PC-9 (cell line): ENCODE measurements at regions of chr3 and their contacts with region 1.

Region 1: DNA sequence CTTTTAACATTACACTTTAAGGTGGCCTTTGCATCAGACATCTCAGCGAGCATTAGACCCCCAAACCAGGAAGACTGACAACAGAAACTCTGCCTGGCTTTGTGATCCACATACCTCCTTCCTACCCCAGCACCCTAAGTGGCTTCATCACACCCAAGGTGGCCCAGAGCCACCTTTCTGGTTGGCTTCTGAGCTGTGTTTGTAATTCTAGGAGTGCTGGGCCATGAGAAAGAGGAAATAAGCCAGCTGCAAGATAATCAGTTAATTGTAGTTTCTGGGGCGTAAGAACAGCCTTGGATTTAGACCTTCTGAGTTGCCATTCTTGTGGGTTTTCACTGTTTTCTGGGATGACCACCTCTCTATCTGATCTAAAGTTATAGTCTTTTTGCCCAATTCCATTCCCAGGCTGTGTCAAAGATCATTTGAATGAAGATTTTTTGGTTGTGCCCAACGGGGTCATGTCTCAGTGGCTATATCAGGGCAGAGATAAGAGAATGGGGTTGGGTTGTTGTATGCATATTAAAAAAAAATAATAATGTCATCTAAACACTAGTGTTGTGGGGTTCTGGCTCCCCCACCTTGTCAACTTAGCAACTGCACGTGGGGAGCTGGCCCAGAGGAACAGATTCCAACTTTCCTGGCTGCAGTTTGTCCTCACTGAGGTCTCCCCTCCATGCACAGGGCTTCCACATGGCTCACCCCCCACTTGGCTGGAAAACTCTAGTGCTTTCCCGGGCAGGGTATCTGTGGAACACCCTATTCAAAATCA is 234.8 kb upstream of the WNT5A start:
- DNase-seq: peak in 1 of 2 experiments; percentile 53
- H3K4me3 ChIP-seq: no peak overlapping the region
- H3K27ac ChIP-seq: 0 out of 2 replicates have a peak overlapping the region, but pooled peaks have one; percentile 20
- H3K4me1 ChIP-seq: peaks cover 16% of the 10 kb centered on the region
- H3K27me3 ChIP-seq: no peaks in the 10 kb centered on the region
- CTCF ChIP-seq: peak; percentile 65

Region 2: GRCh38 chr3:54853573-54854404 is 868.1 kb before region 1 on chr3:
- CTCF ChIA-PET with region 1: no interaction called
- POLR2A ChIA-PET with region 1: no interaction called
- intact Hi-C with region 1: loop called (anchors 1 kb)
- DNase-seq: peak in 1 of 2 experiments; percentile 67
- H3K4me3 ChIP-seq: no peak overlapping the region
- H3K27ac ChIP-seq: no peak overlapping the region
- H3K4me1 ChIP-seq: no peaks in the 10 kb centered on the region
- H3K27me3 ChIP-seq: no peaks in the 10 kb centered on the region
- CTCF ChIP-seq: peak; percentile 93

Region 3: GRCh38 chr3:54951405-54951804 is 770.5 kb before region 1 on chr3:
- CTCF ChIA-PET with region 1: no interaction called
- POLR2A ChIA-PET with region 1: no interaction called
- intact Hi-C with region 1: loop called (anchors 2 kb)
- DNase-seq: peak in 1 of 2 experiments; percentile 42
- H3K4me3 ChIP-seq: no peak overlapping the region
- H3K27ac ChIP-seq: no peak overlapping the region
- H3K4me1 ChIP-seq: peaks cover 17% of the 10 kb centered on the region
- H3K27me3 ChIP-seq: no peaks in the 10 kb centered on the region
- CTCF ChIP-seq: 0 out of 2 replicates have a peak, but pooled peaks have one; percentile 33

Region 4: GRCh38 chr3:55492976-55493375 is 228.9 kb before region 1 on chr3:
- CTCF ChIA-PET with region 1: no interaction called
- POLR2A ChIA-PET with region 1: interaction called, 10 read pairs
- intact Hi-C with region 1: no loop called
- DNase-seq: no peak
- H3K4me3 ChIP-seq: no peak overlapping the region
- H3K27ac ChIP-seq: no peak overlapping the region
- H3K4me1 ChIP-seq: peaks cover 26% of the 10 kb centered on the region
- H3K27me3 ChIP-seq: no peaks in the 10 kb centered on the region
- CTCF ChIP-seq: no peak

Region 5: GRCh38 chr3:55524565-55525244 is 197.2 kb before region 1 on chr3:
- CTCF ChIA-PET with region 1: interaction called, 15 read pairs
- POLR2A ChIA-PET with region 1: no interaction called
- intact Hi-C with region 1: no loop called
- DNase-seq: peak; percentile 55 to 76
- H3K4me3 ChIP-seq: no peak overlapping the region
- H3K27ac ChIP-seq: peak overlapping the region; percentile 67
- H3K4me1 ChIP-seq: peaks cover 27% of the 10 kb centered on the region
- H3K27me3 ChIP-seq: no peaks in the 10 kb centered on the region
- CTCF ChIP-seq: no peak

Region 6: DNA sequence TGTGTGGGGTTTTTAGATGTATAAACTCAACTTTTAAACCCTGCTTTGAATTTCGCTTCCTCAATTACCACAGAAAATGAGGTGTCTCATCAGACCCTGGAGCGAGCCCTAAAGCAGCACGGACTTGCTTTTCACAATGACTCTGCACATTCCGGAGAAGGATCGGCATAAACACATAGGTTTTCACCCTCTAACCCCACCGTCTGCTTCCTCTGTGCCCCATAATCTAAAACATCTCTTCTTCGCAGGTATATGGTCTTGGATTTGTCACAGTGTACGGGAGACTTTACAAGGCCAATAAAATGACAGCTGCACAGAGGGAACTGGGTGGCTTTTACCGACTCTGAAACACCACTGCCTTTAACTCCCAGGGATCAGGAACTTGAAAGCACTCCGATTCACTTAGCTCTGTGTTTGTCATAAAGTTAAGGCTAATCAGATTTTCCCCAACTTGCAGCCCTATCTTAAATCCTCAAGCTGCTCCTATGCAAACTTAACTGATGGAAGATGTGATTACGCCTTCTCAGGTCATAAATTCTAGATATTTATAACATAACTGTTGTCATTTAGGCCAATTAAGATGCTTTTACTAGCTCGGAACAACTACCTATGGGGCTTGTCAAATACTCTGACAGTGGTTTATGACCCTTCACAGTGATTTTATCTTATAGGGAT is 101.4 kb before region 1 on chr3:
- CTCF ChIA-PET with region 1: no interaction called
- POLR2A ChIA-PET with region 1: interaction called, 6 read pairs
- intact Hi-C with region 1: loop called (anchors 1 kb)
- DNase-seq: peak; percentile 79 to 95
- H3K4me3 ChIP-seq: peak overlapping the region; percentile 21; the same call in 1 of the 2 replicates
- H3K27ac ChIP-seq: peak overlapping the region; percentile 100
- H3K4me1 ChIP-seq: peaks cover 82% of the 10 kb centered on the region
- H3K27me3 ChIP-seq: no peaks in the 10 kb centered on the region
- CTCF ChIP-seq: no peak